ENCODE measurements at regions of chr2 and their contacts with region 1.

Region 1: DNA sequence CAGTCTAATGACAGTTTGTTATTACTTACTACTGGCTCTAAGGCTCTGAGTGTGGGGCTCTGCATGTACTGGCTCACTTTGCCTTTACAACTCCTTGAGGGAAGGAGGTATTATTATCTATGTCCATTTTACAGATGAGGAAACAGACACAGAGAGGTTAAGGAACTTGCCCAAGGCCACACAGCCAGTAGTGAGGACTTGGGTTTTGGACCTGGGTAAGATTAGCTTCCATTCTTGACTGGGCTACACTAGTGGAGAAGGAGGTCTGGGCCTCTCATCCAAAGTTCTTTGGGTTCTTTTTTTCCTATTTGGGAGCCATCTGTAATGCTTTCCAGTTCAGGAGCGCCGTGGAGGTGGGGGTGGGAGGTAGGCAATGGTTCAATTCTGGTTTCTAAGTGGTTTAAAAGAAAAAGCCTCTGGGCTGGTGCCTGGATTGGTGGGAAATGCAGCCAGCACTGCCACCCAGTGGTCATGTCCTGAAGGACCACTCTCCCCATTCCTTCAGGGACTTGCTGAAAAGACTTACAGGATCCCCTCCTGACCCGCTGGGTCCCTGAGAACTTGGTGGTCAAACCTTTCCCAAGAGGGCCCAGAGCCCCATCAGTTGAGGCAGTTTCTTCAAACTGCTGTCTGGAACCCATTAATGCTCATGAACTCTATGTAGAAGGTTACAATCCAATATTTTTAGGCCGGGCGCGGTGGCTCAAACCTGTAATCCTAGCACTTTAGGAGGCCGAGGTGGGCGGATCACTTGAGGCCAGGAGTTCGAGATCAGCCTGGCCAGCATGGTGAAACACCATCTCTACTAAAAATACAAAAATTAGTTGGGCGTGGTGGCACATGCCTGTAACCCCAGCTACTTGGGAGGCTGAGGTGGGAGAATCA is 38.6 kb upstream of the NOTO start:
- DNase-seq: peak; percentile 42 to 58 (median 53)
- H3K4me3 ChIP-seq: no peak overlapping the region
- H3K4me3 Mint-ChIP-seq: no peak overlapping the region
- H3K27ac ChIP-seq: no peak overlapping the region
- H3K27ac Mint-ChIP-seq: no peak overlapping the region
- H3K4me1 ChIP-seq: no peaks in the 10 kb centered on the region
- H3K4me1 Mint-ChIP-seq: no peaks in the 10 kb centered on the region
- H3K27me3 ChIP-seq: no peaks in the 10 kb centered on the region
- H3K27me3 Mint-ChIP-seq: peaks cover 13 to 24% (median 15%) of the 10 kb centered on the region in 3 donors
- CTCF ChIP-seq: peak; percentile 90

Region 2: DNA sequence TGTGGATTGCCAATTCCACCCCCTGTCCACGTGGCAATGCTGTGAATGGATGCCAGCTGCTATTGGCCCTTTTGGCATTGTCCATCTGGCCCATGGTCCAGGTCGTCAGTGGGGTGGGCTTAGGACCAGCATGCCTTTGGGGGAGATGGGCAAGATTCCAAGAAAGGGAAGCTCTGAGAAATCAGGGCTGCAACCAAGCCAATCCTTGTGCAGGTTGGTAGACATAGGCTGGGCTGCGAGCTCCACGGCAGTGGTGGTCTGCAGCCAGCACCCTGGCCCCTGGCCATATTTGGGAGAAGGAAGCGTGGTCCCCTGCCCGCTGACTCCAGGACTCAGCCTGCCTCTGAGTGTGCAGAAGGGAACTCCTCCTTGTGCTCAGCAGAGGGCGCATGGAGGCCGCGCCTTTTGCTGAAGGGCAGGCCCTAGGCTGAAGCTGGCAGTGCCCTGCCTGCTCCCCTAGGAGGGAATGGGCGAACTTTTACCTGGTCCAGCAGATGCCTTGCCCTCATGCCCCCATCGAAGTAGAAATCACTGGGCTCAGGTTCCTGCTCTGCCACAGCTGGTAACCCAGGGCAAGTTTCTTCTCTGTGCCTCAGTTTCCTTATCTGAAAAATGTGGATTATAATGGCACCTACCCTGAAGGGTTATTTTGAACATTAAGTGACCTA is 271.1 kb before region 1 on chr2:
- intact Hi-C with region 1: loop called (anchors 5 kb)
- DNase-seq: peak; percentile 57 to 67 (median 58)
- H3K4me3 ChIP-seq: no peak overlapping the region
- H3K4me3 Mint-ChIP-seq: no peak overlapping the region
- H3K27ac ChIP-seq: no peak overlapping the region
- H3K27ac Mint-ChIP-seq: peak overlapping the region in 1 of 7 donors; percentile 62
- H3K4me1 ChIP-seq: peaks cover 21 to 30% of the 10 kb centered on the region in 2 donors
- H3K4me1 Mint-ChIP-seq: peaks cover 41% of the 10 kb centered on the region
- H3K27me3 ChIP-seq: peaks cover 14 to 38% of the 10 kb centered on the region in 2 donors
- H3K27me3 Mint-ChIP-seq: peaks cover 45 to 54% (median 47%) of the 10 kb centered on the region in 3 donors
- CTCF ChIP-seq: peak; percentile 67

Region 3: DNA sequence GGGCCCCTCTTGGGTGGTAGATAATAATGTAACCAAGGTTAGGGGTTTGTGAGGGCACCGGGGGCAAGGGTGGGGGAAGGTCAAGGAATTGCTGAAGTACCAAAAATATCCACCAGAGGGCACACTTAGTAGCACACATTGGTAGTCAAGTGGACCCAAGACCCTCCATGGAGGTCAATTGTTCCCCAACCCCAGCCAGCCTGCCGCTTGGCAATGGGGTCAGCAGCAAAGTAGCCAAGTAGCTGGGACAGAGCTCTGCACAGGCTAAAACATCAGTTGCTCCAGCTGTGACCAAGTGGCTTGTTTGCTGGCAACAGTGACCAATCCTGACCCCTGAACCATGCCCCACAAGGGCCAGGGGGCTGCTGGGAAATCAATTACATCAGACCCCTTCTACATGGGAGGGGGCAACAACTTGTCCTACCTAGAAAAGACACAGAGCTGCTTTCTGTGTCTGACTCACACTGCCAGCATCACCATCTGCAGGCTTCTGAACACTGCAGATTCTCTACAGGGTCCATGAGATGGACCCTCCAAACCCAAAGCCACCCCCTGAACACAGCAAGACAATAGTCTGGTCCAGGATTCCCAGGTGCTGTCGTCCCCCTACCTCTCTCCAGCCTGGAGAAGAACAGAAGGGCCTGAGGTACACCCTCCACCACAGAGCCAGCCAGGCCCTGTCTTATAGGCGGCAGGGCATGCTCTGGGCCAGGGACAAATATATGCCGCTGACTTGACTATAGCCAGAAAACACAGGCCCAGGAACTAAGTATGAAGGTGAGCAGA is 170.4 kb before region 1 on chr2:
- intact Hi-C with region 1: loop called (anchors 5 kb)
- DNase-seq: peak; percentile 26 to 54 (median 47)
- H3K4me3 ChIP-seq: no peak overlapping the region
- H3K4me3 Mint-ChIP-seq: no peak overlapping the region
- H3K27ac ChIP-seq: no peak overlapping the region
- H3K27ac Mint-ChIP-seq: peak overlapping the region in 2 of 7 donors; percentile 32 to 36
- H3K4me1 ChIP-seq: peaks cover 3 to 4% of the 10 kb centered on the region in 2 donors
- H3K4me1 Mint-ChIP-seq: peaks cover 5% of the 10 kb centered on the region
- H3K27me3 ChIP-seq: no peaks in the 10 kb centered on the region
- H3K27me3 Mint-ChIP-seq: no peaks in the 10 kb centered on the region
- CTCF ChIP-seq: peak; percentile 97

Region 4: DNA sequence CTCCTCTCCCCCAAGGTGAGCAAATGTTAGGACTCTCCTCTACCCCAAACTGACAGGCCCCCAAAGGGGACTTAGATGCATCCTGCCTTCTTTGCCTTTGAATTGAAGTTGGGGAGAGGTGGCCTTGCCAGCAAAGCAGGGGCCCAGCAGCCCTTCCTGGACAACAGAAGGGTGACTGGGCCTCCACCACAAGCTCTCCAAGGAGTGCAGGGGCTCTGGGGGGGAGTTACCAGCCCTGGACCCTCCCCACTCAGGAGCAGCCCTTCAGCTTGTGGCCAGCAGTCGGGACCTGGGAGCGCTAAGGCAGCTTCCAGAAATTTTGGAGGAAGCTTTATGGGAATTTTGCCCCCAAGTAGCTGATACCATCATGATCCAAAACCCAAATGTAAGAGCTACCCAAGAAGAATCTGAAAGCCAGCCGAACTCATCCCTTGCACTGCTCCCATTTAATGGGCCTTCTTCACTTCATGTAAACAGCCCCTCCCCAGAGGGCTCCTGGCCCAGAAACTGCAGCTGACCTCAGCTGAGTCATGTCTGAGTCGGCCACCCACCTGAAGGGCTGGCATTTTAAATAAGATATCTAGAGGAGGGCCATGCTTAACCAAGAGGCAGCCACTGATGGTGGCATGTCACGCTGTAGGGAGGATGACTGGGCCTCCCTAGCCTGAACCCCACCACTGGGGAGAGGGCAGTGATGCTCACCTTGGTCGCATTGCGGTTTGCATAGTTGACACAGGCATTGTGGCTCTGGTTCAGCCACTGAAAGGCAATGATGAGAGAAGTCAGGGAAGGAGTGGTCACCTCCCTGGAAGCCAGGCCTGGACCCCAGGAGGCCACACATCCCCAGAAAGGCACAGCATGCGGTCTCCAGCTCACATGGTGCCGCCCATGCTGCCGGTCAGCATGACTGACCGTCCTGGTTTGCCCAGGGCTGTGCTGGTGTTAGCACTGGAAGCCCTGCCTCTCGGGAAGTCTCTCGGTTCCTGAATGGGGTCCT is 163.7 kb before region 1 on chr2:
- intact Hi-C with region 1: loop called in 1 of 2 experiments (anchors 5 kb)
- DNase-seq: no peak
- H3K4me3 ChIP-seq: no peak overlapping the region
- H3K4me3 Mint-ChIP-seq: no peak overlapping the region
- H3K27ac ChIP-seq: no peak overlapping the region
- H3K27ac Mint-ChIP-seq: no peak overlapping the region
- H3K4me1 ChIP-seq: no peaks in the 10 kb centered on the region
- H3K4me1 Mint-ChIP-seq: no peaks in the 10 kb centered on the region
- H3K27me3 ChIP-seq: no peaks in the 10 kb centered on the region
- H3K27me3 Mint-ChIP-seq: peaks cover 0 to 2% (median 0%) of the 10 kb centered on the region in 3 donors
- CTCF ChIP-seq: no peak

Region 5: GRCh38 chr2:73085691-73086360 is 77.9 kb before region 1 on chr2:
- intact Hi-C with region 1: loop called (anchors 2 kb)
- DNase-seq: peak; percentile 55 to 75 (median 71)
- H3K4me3 ChIP-seq: no peak overlapping the region
- H3K4me3 Mint-ChIP-seq: no peak overlapping the region
- H3K27ac ChIP-seq: no peak overlapping the region
- H3K27ac Mint-ChIP-seq: no peak overlapping the region
- H3K4me1 ChIP-seq: no peaks in the 10 kb centered on the region
- H3K4me1 Mint-ChIP-seq: peaks cover 2% of the 10 kb centered on the region
- H3K27me3 ChIP-seq: no peaks in the 10 kb centered on the region
- H3K27me3 Mint-ChIP-seq: peaks cover under 1 to 7% (median 1%) of the 10 kb centered on the region in 3 donors
- CTCF ChIP-seq: peak; percentile 94

Measured in CD14-positive monocyte (primary cell).